ENCODE measurements at regions of chr2 and their contacts with region 1.

Region 1: DNA sequence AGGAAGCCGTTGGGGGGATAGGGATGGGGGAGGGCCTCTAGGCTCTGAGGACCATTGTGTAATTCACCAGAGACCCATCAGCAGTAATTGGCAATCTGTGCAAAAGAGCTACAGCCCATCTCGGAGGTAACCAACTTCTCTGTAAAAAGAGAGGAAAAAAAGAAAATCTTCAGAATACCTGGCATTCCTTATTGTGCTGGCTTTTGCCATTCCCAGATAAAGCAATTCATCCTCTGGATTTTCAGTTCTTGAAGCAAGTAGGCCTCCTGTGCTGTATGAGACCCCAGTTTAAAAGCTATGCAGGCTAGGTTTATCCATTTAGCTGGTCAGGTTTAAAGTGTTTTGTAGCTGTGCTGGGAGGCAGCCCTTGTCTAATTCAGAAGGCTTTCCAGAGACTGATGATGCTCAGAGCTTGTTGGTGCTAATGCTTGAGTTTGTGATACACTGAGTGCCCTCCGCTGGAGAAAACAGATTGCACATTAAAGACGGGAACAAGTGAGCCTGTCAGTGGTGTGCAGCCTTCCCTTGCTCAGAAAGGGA is at the start of gene LRRTM4:
- DNase-seq: peak; percentile 20
- ATAC-seq: peak; percentile 92
- total RNA-seq, gene LRRTM4: 0.69 TPM

Region 2: DNA sequence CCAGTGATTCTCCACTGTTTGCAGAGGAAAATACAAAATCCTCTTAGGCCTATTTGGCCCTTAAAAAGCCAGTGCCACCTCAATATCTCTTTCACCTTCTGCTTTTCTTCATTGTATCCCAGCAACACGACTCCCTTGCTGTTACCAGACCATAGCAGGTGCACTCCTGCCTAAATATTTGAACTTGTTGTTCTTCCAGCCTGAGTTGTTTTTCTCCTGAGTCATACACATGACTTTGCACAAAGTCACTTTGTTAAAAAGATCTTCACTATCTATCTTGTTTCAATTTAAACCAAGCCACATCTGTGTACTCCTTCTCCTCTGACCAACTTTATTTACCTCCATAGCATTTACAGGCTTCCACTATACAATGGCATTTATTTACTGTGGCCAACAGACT is 103.5 kb before region 1 on chr2:
- intact Hi-C with region 1: no loop called
- DNase-seq: no peak
- ATAC-seq: peak; percentile 26

Region 3: GRCh38 chr2:77434880-77435279 is 87.1 kb before region 1 on chr2:
- intact Hi-C with region 1: loop called (anchors 10 kb)
- DNase-seq: no peak
- ATAC-seq: no peak

Measured in left ventricle myocardium superior (tissue), 1 donor.